HepG2 (cell line): ENCODE measurements at regions of chr2 and their contacts with region 1.

Region 1: GRCh38 chr2:46835520-46835919 is 80.1 kb downstream of the MCFD2 start:
- DNase-seq: no peak
- ATAC-seq: no peak
- H3K4me3 ChIP-seq: no peak overlapping the region
- H3K27ac ChIP-seq: no peak overlapping the region
- H3K4me1 ChIP-seq: peaks cover 7% of the 10 kb centered on the region
- H3K27me3 ChIP-seq: peaks cover 1 to 20% of the 10 kb centered on the region in 2 experiments; a peak in 3 of 5 replicates
- CTCF ChIP-seq: no peak
- EP300 ChIP-seq: no peak
- POLR2A ChIP-seq: no peak
- RAD21 ChIP-seq: no peak

Region 2: DNA sequence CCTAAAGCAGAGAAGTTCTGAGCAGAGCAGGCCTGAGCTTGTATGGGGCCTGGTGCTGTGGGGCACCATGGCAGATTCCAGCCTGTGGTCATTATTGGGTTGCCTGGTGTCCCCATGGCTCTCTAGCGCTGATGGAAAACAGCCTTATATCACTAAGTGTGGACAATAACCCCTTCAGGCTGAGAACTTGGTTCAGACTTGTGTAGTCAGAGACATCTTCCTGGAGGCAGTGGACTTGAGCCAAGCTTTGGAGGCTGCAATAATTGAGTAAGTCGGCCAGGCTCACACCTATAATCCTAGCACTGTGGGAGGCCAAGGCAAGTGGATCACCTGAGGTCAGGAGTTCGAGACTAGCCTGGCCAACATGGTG is 16.6 kb before region 1 on chr2:
- CTCF ChIA-PET with region 1: no interaction called
- POLR2A ChIA-PET with region 1: no interaction called
- in situ Hi-C with region 1: no loop called
- intact Hi-C with region 1: loop called (anchors 1 kb)
- DNase-seq: no peak
- ATAC-seq: no peak
- H3K4me3 ChIP-seq: no peak overlapping the region
- H3K27ac ChIP-seq: no peak overlapping the region
- H3K4me1 ChIP-seq: peaks cover 3% of the 10 kb centered on the region
- H3K27me3 ChIP-seq: peaks cover 0 to 22% of the 10 kb centered on the region in 2 experiments; a peak in 4 of 5 replicates
- CTCF ChIP-seq: no peak
- EP300 ChIP-seq: no peak
- POLR2A ChIP-seq: no peak
- RAD21 ChIP-seq: no peak